ENCODE measurements at regions of chr7 and their contacts with region 1.

Region 1: DNA sequence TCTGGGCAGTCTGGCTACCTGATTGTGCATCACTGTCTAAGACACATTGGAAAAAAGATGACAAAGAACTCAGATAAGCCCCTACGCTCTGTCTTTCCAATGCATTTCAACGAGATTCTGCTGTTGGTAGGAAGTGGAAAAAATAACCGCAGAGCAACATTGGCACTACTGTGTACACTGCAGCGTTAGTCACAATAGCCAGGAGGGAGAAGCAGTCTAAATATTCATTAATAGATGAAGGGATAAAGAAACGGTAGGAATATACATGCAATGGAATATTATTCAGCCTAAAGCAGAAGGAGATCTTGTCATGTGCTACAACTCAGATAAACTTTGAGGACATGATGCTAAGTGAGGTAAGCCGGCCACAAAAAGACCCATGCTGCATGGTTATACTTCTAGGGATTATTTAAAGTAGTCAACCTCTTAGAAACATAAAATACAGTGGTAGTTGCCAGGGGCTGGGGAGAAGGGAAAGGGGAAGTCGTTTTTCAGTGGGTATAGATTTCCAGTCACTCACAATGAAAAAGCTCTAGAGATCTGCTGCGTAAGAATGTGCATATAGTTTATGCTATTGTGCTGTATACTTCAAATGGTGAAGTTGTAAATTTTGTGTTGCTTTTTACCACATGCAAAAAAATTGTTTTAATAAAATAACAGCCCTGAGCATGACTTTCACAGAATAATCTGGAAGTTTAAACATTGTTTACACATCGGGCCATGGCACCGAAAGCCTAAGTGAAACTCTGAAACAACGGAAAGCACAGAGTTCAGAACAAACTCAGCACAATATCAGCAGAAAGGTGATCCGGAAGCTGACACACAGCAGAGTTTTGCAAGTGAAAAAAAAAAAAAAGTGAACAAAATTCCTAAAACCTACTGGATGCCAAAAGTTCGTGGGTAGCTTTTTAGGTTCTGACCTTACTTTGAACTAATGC is 40.1 kb downstream of the ELMO1 start:
- DNase-seq: peak in 4 of 14 experiments; percentile 33 to 64 (median 50)
- ATAC-seq: peak; percentile 75
- H3K4me3 ChIP-seq: peak overlapping the region; percentile 49
- H3K4me3 Mint-ChIP-seq: peak overlapping the region; percentile 91
- H3K27ac ChIP-seq: peak overlapping the region in 1 of 2 donors; percentile 26
- H3K27ac Mint-ChIP-seq: peak overlapping the region; percentile 81
- H3K4me1 ChIP-seq: peaks cover 21% of the 10 kb centered on the region
- H3K4me1 Mint-ChIP-seq: peaks cover 75% of the 10 kb centered on the region
- H3K27me3 ChIP-seq: no peaks in the 10 kb centered on the region
- H3K27me3 Mint-ChIP-seq: no peaks in the 10 kb centered on the region
- CTCF ChIP-seq: no peak

Region 2: DNA sequence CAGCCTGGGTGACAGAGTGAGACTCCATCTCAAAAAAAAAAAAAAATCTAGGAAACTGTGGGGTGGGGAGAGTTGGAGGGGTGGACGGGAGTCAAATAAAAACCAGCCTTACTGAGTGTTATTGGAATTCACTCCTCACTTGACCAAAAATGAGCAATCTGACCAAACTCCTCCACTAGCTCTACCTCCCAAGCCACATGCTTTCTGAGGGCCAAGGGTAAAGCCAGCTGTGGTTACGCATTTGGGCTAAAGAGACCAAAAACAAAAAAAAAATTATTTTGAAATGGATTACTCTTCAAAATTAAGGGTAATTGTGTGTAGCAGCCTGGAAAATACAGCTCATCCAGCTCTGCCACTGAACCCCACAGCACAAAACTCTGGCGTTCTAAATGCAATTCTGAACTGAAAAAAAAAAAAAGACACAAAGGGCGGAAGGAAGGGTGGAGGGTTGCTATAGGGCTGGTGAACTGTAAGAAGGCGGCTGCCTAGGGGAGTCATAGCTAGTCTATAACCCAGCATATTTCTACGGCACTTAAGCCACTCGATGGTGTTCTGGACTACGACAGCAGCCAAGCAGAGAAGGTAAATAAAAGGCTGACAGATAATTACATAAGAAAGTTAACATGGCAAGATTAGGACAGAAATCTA is 32.3 kb after region 1 on chr7:
- CTCF ChIA-PET with region 1: no interaction called
- POLR2A ChIA-PET with region 1: interaction called, 73 read pairs
- intact Hi-C with region 1: loop called (anchors 2 to 5 kb)
- DNase-seq: peak in 11 of 14 experiments; percentile 9 to 70 (median 30)
- ATAC-seq: peak; percentile 91
- H3K4me3 ChIP-seq: peak overlapping the region; percentile 4
- H3K4me3 Mint-ChIP-seq: peak overlapping the region; percentile 73
- H3K27ac ChIP-seq: peak overlapping the region; percentile 54 to 55
- H3K27ac Mint-ChIP-seq: peak overlapping the region; percentile 97
- H3K4me1 ChIP-seq: peaks cover 54% of the 10 kb centered on the region
- H3K4me1 Mint-ChIP-seq: peaks cover 85% of the 10 kb centered on the region
- H3K27me3 ChIP-seq: no peaks in the 10 kb centered on the region
- H3K27me3 Mint-ChIP-seq: no peaks in the 10 kb centered on the region
- CTCF ChIP-seq: no peak

Measured in CD4-positive, alpha-beta T cell (primary cell).